ENCODE measurements at regions of chr3 and their contacts with region 1.

Region 1: DNA sequence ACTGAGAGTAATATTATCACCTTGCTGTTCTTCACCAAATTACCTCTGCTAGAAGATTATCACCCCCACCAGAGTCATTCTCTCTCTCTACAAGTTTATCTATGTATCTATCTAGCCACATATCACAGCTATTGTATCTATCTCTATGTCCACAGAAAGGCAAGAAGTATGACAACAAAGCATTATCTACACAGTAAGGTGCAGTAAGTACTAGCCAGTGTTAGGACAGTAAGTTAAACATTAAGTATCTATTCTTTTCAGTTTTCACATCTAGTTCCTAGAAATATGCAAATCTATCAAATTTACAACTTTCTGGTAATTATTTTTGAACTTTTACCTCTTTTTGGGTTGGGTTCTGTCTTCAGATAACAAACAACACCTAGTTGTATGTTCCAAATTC is 26.5 kb upstream of the XXYLT1 start:
- DNase-seq: no peak
- H3K4me3 ChIP-seq: no peak overlapping the region
- H3K4me3 Mint-ChIP-seq: no peak overlapping the region
- H3K27ac Mint-ChIP-seq: peak overlapping the region; percentile 12
- H3K4me1 ChIP-seq: peaks cover 12% of the 10 kb centered on the region
- H3K4me1 Mint-ChIP-seq: peaks cover 12% of the 10 kb centered on the region
- H3K27me3 ChIP-seq: no peaks in the 10 kb centered on the region
- H3K27me3 Mint-ChIP-seq: no peaks in the 10 kb centered on the region
- CTCF ChIP-seq: no peak

Region 2: DNA sequence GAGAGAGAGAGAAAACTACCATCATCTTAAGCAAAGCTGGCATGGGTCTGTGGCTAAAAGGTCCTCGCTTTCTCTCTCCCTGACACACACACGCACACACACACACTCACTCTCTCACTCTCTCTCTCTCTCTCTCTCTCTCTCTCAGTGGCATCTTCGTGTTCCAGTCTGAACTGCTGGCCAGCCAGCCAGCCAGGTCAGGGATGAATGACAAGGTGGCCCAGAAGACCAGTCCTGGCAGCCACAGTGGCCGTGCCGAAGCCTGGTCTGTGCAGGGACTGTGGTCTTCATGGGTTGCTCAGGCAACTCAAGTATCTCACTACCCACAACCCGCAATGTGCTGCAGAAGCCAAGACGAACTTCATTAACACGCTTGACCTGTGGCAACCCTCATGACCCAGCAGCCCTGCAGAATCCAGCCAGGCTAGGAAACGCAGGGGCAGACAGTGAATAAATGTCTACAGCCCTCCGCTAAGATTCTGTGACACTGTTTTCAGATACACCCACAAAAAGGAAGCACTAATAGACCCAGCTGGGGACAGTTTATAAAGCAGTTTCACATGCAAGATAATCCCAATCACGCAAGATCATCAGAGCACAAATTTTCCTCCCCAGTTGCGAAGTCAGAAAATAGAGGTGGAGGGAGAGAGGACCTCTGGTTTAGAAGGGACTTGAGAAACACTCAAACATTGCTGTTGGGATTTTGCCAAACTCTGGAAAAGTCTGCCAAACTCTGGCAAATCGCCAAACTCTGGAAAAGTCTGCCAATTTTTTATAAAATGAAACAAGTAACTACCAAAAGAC is 92.9 kb before region 1 on chr3:
- CTCF ChIA-PET with region 1: no interaction called
- POLR2A ChIA-PET with region 1: no interaction called
- intact Hi-C with region 1: no loop called
- DNase-seq: no peak
- H3K4me3 ChIP-seq: no peak overlapping the region
- H3K4me3 Mint-ChIP-seq: no peak overlapping the region
- H3K27ac Mint-ChIP-seq: no peak overlapping the region
- H3K4me1 ChIP-seq: no peaks in the 10 kb centered on the region
- H3K4me1 Mint-ChIP-seq: no peaks in the 10 kb centered on the region
- H3K27me3 ChIP-seq: no peaks in the 10 kb centered on the region
- H3K27me3 Mint-ChIP-seq: no peaks in the 10 kb centered on the region
- CTCF ChIP-seq: no peak

Region 3: DNA sequence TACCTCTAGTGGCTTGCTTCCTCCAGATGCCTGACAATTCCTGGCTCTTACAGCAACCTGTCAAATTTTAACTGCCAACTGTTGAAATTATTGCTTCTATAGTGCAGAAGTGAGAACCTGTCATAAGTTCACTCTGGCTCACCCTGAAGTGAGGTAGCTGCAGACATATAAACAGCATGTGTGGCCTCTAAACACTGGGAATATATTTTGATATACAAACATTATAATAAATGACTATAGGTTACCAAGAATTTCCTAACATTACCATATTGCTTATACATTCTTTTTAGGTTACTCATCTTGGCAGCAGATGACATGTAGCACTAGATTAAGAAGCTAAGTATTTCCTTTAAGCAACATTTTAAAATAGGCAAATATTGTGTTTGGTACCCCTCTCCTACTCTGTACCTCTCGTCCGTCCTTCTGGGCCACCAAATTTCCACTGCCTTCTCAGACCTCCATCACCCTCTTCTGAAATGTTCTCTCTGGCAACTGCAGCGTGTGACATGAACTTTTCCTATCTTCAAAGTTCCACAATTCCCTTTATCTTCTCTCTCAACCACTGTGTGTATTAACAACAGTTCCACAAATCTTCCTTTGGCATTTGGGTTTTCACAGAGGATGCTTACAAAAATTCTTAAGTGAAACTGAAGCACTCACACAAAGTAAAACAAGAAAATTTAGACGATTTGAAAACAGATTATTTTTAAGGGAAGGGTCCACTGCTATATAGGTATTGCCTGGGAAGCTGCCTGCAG is 11.2 kb before region 1 on chr3:
- CTCF ChIA-PET with region 1: no interaction called
- POLR2A ChIA-PET with region 1: interaction called, 3 read pairs
- intact Hi-C with region 1: loop called (anchors 1 kb)
- DNase-seq: no peak
- H3K4me3 ChIP-seq: no peak overlapping the region
- H3K4me3 Mint-ChIP-seq: peak overlapping the region; percentile 4
- H3K27ac Mint-ChIP-seq: no peak overlapping the region
- H3K4me1 ChIP-seq: peaks cover 56% of the 10 kb centered on the region
- H3K4me1 Mint-ChIP-seq: peaks cover 28% of the 10 kb centered on the region
- H3K27me3 ChIP-seq: no peaks in the 10 kb centered on the region
- H3K27me3 Mint-ChIP-seq: no peaks in the 10 kb centered on the region
- CTCF ChIP-seq: no peak

Measured in Caco-2 (cell line).